ENCODE measurements at regions of chr20 and their contacts with region 1.

Region 1: GRCh38 chr20:59412875-59413284 is 112.5 kb downstream of the EDN3 start:
- DNase-seq: no peak
- H3K4me3 ChIP-seq: no peak overlapping the region
- H3K27ac ChIP-seq: no peak overlapping the region
- H3K4me1 ChIP-seq: no peaks in the 10 kb centered on the region
- H3K27me3 ChIP-seq: peaks cover 7% of the 10 kb centered on the region
- CTCF ChIP-seq: no peak

Region 2: DNA sequence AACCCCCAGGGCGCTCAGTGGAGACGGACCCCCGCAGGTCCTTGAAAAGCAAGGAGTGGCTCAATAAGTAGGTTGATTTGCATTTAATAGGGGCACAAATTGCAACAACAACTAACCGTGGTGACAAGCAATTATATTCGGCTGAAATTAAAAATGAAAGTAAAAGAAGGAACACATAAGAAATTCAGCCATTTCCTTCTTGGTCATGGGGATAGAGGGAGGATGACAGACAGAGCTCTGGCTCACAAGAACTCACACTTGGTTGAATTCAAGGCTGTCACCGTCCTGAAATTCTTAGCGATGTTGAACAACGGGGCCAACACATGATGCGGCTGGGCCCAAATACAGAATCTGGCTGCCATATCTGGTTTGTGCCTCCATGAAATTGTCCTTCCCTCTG is 16.5 kb after region 1 on chr20:
- CTCF ChIA-PET with region 1: interaction called, 12 read pairs
- POLR2A ChIA-PET with region 1: no interaction called
- intact Hi-C with region 1: no loop called
- DNase-seq: peak; percentile 19
- H3K4me3 ChIP-seq: peak overlapping the region; percentile 28
- H3K27ac ChIP-seq: no peak overlapping the region
- H3K4me1 ChIP-seq: peaks cover 2% of the 10 kb centered on the region
- H3K27me3 ChIP-seq: no peaks in the 10 kb centered on the region
- CTCF ChIP-seq: no peak

Measured in A673 (cell line).